Heart right ventricle (tissue), 16 donors: ENCODE measurements at regions of chr19 and their contacts with region 1.

Region 1: GRCh38 chr19:39341719-39342604 is at the start of gene SAMD4B:
- DNase-seq: peak; percentile 99 to 100
- ATAC-seq: peak; percentile 95 to 98 (median 97)
- H3K4me3 ChIP-seq: peak within 1 kb of the TSS; percentile 73 to 97 (median 86)
- H3K27ac ChIP-seq: peak within 1 kb of the TSS; percentile 76 to 97 (median 86)
- H3K4me1 ChIP-seq: peaks cover 2 to 62% (median 44%) of the 10 kb centered on the region in 9 donors
- H3K27me3 ChIP-seq: no peaks in the 10 kb centered on the region
- CTCF ChIP-seq: peak; percentile 68 to 95 (median 92)
- total RNA-seq, gene SAMD4B: 35.5 to 60.4 (median 47.2) TPM

Region 2: GRCh38 chr19:39125554-39126311 is 216.2 kb before region 1 on chr19 and contains the start of gene PAK4:
- intact Hi-C with region 1: loop called in 2 of 10 experiments (anchors 5 kb)
- DNase-seq: peak; percentile 96 to 98
- ATAC-seq: peak; percentile 99 to 100 (median 100)
- H3K4me3 ChIP-seq: peak within 1 kb of the TSS; percentile 45 to 85 (median 80)
- H3K27ac ChIP-seq: peak within 1 kb of the TSS in 9 of 10 donors; percentile 50 to 89 (median 83)
- H3K4me1 ChIP-seq: peaks cover 2 to 61% (median 31%) of the 10 kb centered on the region in 9 donors
- H3K27me3 ChIP-seq: peaks cover 0 to 11% (median 5%) of the 10 kb centered on the region in 7 donors
- CTCF ChIP-seq: no peak
- total RNA-seq, gene PAK4: 11.7 to 22.4 (median 16.1) TPM

Region 3: GRCh38 chr19:39144245-39145071 is 197.5 kb before region 1 on chr19:
- intact Hi-C with region 1: no loop called
- DNase-seq: no peak
- ATAC-seq: peak in 7 of 8 donors; percentile 35 to 72 (median 41)
- H3K4me3 ChIP-seq: no peak overlapping the region
- H3K27ac ChIP-seq: peak overlapping the region in 4 of 10 donors; percentile 43 to 76 (median 49)
- H3K4me1 ChIP-seq: peaks cover 10 to 38% (median 30%) of the 10 kb centered on the region in 9 donors
- H3K27me3 ChIP-seq: no peaks in the 10 kb centered on the region
- CTCF ChIP-seq: no peak

Region 4: DNA sequence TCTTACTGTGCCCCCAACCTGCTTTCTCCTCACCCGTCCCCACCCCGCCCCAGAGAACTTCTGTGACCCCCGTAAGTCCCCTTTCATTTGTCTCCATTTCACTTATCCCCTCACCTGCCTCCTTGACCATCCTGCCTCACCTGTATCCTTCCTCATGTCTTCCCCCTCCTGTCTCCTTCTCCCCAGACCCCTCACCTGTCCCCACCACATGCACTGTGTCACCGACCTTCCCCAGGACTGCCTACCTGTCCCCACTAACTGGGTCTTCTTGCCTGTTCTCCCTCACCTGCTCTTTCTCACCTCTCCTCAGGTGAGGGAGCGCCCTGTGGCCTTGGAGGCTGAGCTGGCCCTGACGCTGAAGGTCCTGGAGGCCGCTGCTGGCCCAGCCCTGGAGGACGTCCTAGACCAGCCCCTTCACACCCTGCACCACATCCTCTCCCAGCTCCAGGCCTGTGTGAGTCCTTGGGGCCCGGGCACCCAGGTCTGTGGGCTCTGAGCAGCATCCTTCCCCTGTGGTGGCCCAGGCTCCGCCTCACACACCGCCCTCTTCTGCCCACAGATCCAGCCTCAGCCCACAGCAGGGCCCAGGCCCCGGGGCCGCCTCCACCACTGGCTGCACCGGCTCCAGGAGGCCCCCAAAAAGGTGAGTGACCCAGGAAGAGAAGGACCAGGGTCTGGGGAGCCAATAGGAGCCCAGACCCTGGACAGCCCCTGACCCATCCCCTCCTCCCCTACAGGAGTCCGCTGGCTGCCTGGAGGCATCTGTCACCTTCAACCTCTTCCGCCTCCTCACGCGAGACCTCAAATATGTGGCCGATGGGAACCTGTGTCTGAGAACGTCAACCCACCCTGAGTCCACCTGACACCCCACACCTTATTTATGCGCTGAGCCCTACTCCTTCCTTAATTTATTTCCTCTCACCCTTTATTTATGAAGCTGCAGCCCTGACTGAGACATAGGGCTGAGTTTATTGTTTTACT is 44.0 kb before region 1 on chr19:
- intact Hi-C with region 1: no loop called
- DNase-seq: peak in 1 of 2 donors; percentile 23
- ATAC-seq: peak in 2 of 8 donors; percentile 57 to 75
- H3K4me3 ChIP-seq: no peak overlapping the region
- H3K27ac ChIP-seq: no peak overlapping the region
- H3K4me1 ChIP-seq: no peaks in the 10 kb centered on the region
- H3K27me3 ChIP-seq: peaks cover 0 to 71% (median 42%) of the 10 kb centered on the region in 7 donors
- CTCF ChIP-seq: no peak

Region 5: DNA sequence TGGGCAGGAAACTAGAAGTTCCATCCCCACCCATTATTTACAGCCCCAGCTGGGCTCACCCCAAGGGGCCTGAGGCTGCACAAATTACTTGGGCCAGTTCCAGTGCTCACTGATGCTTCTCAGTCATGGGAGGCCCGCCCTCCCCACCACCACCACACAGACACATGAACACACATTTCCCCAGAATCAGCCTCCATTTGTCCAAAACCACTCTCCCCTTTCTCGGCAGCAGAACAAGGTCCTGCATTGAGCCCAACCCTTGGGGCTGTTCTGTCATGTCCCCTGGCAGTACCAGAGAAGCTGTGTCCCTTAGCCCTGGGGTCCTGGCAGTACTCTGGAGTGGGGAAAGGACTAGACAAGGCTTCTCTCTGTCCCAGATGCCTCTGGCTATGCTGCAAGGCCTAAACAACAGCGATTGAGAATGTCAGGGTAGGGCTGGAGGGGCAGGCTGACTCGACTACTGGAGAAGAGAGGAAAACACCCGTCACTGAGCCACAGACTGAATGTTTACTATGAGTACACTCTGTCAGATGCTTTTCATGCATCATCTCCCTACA is 22.0 kb after region 1 on chr19:
- intact Hi-C with region 1: no loop called
- DNase-seq: peak; percentile 23 to 33
- ATAC-seq: peak; percentile 23 to 79 (median 63)
- H3K4me3 ChIP-seq: no peak overlapping the region
- H3K27ac ChIP-seq: peak overlapping the region in 6 of 10 donors; percentile 19 to 50 (median 36)
- H3K4me1 ChIP-seq: peaks cover 3 to 24% (median 20%) of the 10 kb centered on the region in 9 donors
- H3K27me3 ChIP-seq: no peaks in the 10 kb centered on the region
- CTCF ChIP-seq: no peak

Region 6: DNA sequence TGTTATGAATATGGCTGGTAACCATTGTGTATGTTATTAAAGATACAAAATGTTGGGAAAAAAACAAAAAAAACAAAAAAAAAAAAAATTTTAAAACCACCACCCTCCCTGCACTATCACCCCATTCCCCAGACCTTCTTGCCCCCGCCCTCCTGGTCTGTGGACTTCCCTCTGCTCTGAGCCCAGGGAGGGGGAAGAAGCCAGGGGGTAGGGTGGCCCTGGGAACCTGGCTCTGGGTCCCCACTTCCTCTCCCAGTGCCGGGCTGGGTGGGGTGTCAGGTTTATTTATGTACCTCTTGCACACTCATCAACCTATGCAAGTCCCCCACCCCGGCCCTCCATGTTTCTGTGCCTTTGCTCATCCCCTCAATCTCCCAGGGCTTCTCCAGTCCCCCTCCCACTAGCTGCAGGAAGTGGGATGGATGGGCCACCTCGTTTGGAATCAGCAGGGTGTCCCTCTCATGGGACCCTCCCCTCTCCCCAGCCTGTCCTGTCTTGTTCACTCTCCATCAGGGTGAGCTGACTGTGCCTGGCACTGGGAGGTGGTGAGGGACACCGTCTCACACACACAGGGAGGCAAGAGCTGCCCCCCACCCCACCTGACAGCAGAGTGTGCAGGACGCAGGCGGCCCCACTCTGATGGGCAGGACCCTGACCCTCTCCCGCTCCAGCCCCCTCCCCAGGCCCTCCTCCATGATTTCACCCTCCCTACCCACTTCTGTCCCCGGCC is 43.0 kb after region 1 on chr19:
- intact Hi-C with region 1: loop called in 4 of 10 experiments (anchors 1 to 5 kb)
- DNase-seq: no peak
- ATAC-seq: no peak
- H3K4me3 ChIP-seq: no peak overlapping the region
- H3K27ac ChIP-seq: no peak overlapping the region
- H3K4me1 ChIP-seq: peaks cover 2 to 9% (median 5%) of the 10 kb centered on the region in 9 donors
- H3K27me3 ChIP-seq: no peaks in the 10 kb centered on the region
- CTCF ChIP-seq: no peak

Region 7: GRCh38 chr19:39390755-39391592 is 49.0 kb after region 1 on chr19 and contains the starts of genes MED29 and PAF1:
- intact Hi-C with region 1: loop called in 4 of 10 experiments (anchors 1 to 5 kb)
- DNase-seq: peak; percentile 94 to 99
- ATAC-seq: peak; percentile 94 to 98 (median 96)
- H3K4me3 ChIP-seq: peak within 1 kb of the TSS; percentile 66 to 99 (median 94)
- H3K27ac ChIP-seq: peak within 1 kb of the TSS; percentile 94 to 100 (median 98)
- H3K4me1 ChIP-seq: peaks cover 12 to 27% (median 24%) of the 10 kb centered on the region in 9 donors
- H3K27me3 ChIP-seq: no peaks in the 10 kb centered on the region
- CTCF ChIP-seq: peak in 2 of 9 donors; percentile 4 to 16
- total RNA-seq, gene MED29: 22.9 to 32.3 (median 27.1) TPM
- total RNA-seq, gene PAF1: 34.3 to 46.4 (median 38.8) TPM

Region 8: GRCh38 chr19:39412100-39412866 is 70.3 kb after region 1 on chr19 and contains the start of gene PLEKHG2:
- intact Hi-C with region 1: loop called in 3 of 10 experiments (anchors 5 kb)
- DNase-seq: peak; percentile 94 to 98
- ATAC-seq: peak; percentile 57 to 74 (median 72)
- H3K4me3 ChIP-seq: peak within 1 kb of the TSS; percentile 66 to 98 (median 86)
- H3K27ac ChIP-seq: peak within 1 kb of the TSS; percentile 94 to 100 (median 99)
- H3K4me1 ChIP-seq: peaks cover 11 to 71% (median 53%) of the 10 kb centered on the region in 9 donors
- H3K27me3 ChIP-seq: no peaks in the 10 kb centered on the region
- CTCF ChIP-seq: peak; percentile 68 to 93 (median 88)
- total RNA-seq, gene PLEKHG2: 8.3 to 23.1 (median 15.1) TPM

Region 9: GRCh38 chr19:39445265-39446111 is 103.5 kb after region 1 on chr19 and contains the start of gene SUPT5H:
- intact Hi-C with region 1: loop called in 1 of 10 experiments (anchors 5 kb)
- DNase-seq: peak; percentile 96 to 98
- ATAC-seq: peak; percentile 98 to 99 (median 99)
- H3K4me3 ChIP-seq: peak within 1 kb of the TSS; percentile 72 to 97 (median 84)
- H3K27ac ChIP-seq: peak within 1 kb of the TSS; percentile 70 to 97 (median 93)
- H3K4me1 ChIP-seq: peaks cover 6 to 49% (median 35%) of the 10 kb centered on the region in 9 donors
- H3K27me3 ChIP-seq: no peaks in the 10 kb centered on the region
- CTCF ChIP-seq: no peak
- total RNA-seq, gene SUPT5H: 65.0 to 96.6 (median 84.3) TPM